ENCODE measurements at regions of chr10 and their contacts with region 1.

Region 1: DNA sequence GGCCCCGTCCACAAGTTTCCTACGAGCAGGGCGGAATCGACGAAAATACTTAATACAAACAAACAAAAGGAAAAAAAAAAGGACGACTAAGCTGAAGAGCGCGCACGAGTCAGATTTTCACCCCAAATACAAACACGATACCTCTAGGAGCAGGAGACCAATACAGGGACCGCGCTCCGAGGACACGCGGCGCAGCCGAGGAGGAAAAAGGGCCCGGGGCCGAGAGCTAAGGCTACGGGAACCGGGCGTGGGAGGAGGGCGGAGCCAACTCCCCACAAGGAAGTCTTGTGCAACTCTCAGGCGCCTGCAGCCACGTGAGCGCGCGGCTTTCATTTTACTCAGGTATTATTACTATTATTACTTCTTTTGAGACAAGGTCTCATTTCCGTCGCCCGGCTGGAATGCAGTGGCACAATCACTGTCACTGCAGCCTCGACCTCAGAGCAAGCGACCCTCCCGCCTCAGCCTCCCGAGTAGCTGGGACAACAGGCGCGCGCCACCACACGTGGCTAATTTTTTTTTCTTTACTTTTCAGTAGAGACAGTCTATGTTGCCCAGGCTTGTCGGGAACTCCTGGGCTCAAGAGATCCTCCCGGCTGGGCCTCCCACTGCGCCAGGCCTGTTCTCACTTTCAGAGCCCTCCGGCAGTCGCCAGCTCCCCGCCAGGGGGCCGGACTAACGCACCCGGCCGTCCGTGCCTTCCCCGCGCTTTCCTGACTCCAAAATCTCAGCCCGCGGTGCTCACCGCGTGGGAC is 1.2 kb downstream of the HNRNPF start:
- DNase-seq: no peak
- H3K4me3 ChIP-seq: peak overlapping the region; percentile 83
- CTCF ChIP-seq: peak; percentile 63

Region 2: GRCh38 chr10:43396928-43397624 is 10.7 kb before region 1 on chr10:
- CTCF ChIA-PET with region 1: interaction called, 3 read pairs
- POLR2A ChIA-PET with region 1: interaction called, 15 read pairs
- DNase-seq: no peak
- H3K4me3 ChIP-seq: peak overlapping the region; percentile 64
- CTCF ChIP-seq: no peak

Region 3: GRCh38 chr10:43491855-43492254 is 84.1 kb after region 1 on chr10:
- CTCF ChIA-PET with region 1: no interaction called
- POLR2A ChIA-PET with region 1: no interaction called
- DNase-seq: no peak
- H3K4me3 ChIP-seq: no peak overlapping the region
- CTCF ChIP-seq: no peak

Measured in AG04449 (cell line).